MCF 10A (cell line): ENCODE measurements at regions of chr10 and their contacts with region 1.

Region 1: GRCh38 chr10:92517034-92517655 is 56.7 kb downstream of the IDE start:
- DNase-seq: peak; percentile 79
- H3K4me3 Mint-ChIP-seq: no peak overlapping the region
- H3K27ac Mint-ChIP-seq: no peak overlapping the region
- H3K4me1 Mint-ChIP-seq: no peaks in the 10 kb centered on the region
- H3K27me3 Mint-ChIP-seq: no peaks in the 10 kb centered on the region
- CTCF ChIP-seq: peak; percentile 70

Region 2: GRCh38 chr10:92530421-92530820 is 13.3 kb after region 1 on chr10:
- CTCF ChIA-PET with region 1: interaction called, 19 read pairs
- POLR2A ChIA-PET with region 1: interaction called, 4 read pairs
- intact Hi-C with region 1: no loop called
- DNase-seq: no peak
- H3K4me3 Mint-ChIP-seq: no peak overlapping the region
- H3K27ac Mint-ChIP-seq: no peak overlapping the region
- H3K4me1 Mint-ChIP-seq: no peaks in the 10 kb centered on the region
- H3K27me3 Mint-ChIP-seq: no peaks in the 10 kb centered on the region
- CTCF ChIP-seq: no peak

Region 3: DNA sequence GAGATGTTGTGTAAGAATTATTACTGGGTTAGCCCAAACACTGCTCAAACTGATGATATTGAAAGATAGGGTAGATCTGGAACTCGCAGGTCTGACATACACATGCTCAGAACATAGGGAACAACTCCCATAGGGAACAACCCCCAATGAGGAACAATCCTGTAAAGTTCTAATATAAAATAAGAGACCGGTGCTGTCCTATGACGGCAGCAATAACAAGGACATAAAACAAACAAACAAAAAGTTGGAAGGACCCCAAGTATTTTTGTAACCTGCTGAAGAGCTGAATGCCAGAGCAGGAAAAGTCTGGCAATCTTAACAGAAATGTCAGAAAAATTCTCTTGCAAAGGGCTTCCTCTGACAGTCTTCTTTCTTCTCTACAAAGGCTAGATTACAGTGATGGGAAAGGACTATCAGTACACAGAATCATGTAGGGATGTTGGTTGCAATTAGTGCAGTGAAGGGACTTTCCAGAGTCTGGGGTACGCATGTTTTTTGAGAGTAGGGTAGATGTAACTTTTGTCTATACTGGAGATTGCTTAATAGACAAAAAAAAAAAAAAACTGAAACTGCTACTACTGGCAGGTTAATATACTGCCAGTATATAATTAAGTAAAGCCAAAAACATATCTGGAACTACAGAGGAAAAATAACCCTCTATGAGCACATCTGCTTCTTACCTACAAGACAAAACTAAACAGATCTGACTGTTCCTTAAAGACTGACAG is 21.2 kb after region 1 on chr10:
- CTCF ChIA-PET with region 1: interaction called, 11 read pairs
- POLR2A ChIA-PET with region 1: no interaction called
- intact Hi-C with region 1: no loop called
- DNase-seq: peak; percentile 1
- H3K4me3 Mint-ChIP-seq: no peak overlapping the region
- H3K27ac Mint-ChIP-seq: no peak overlapping the region
- H3K4me1 Mint-ChIP-seq: peaks cover 9% of the 10 kb centered on the region
- H3K27me3 Mint-ChIP-seq: no peaks in the 10 kb centered on the region
- CTCF ChIP-seq: no peak

Region 4: DNA sequence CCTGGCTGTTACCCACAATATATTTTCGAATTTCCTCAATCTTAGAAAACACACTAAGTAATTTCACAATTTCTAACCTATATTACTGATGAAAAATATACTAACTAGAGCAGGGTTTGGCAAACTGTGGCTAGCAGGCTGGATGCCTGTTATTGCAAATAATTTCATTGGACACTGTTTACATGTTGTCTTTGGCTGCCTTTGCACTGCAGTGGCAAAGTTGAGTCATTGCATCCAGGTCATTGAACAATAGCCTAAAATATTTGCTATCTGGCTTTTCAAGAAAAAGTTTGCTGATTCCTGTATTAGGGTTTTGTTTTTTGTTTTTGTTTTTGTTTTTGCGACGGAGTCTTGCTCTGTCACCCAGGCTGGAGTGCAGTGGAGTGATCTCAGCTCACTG is 123.0 kb after region 1 on chr10:
- CTCF ChIA-PET with region 1: interaction called, 5 read pairs
- POLR2A ChIA-PET with region 1: no interaction called
- intact Hi-C with region 1: loop called (anchors 1 kb)
- DNase-seq: peak; percentile 82
- H3K4me3 Mint-ChIP-seq: no peak overlapping the region
- H3K27ac Mint-ChIP-seq: no peak overlapping the region
- H3K4me1 Mint-ChIP-seq: peaks cover 5% of the 10 kb centered on the region
- H3K27me3 Mint-ChIP-seq: no peaks in the 10 kb centered on the region
- CTCF ChIP-seq: no peak